ENCODE measurements at regions of chr2 and their contacts with region 1.

Region 1: GRCh38 chr2:69095305-69095704 is 82.3 kb downstream of the ANTXR1 start:
- DNase-seq: no peak
- H3K4me3 ChIP-seq: no peak overlapping the region
- H3K27ac ChIP-seq: peak overlapping the region; percentile 6 to 9
- H3K4me1 ChIP-seq: peaks cover 0 to 16% of the 10 kb centered on the region in 2 donors
- H3K27me3 ChIP-seq: no peaks in the 10 kb centered on the region
- CTCF ChIP-seq: no peak

Region 2: GRCh38 chr2:69059731-69060290 is 35.5 kb before region 1 on chr2:
- intact Hi-C with region 1: loop called (anchors 5 kb)
- DNase-seq: no peak
- H3K4me3 ChIP-seq: no peak overlapping the region
- H3K27ac ChIP-seq: peak overlapping the region; percentile 18 to 45
- H3K4me1 ChIP-seq: peaks cover 15 to 27% of the 10 kb centered on the region in 2 donors
- H3K27me3 ChIP-seq: no peaks in the 10 kb centered on the region
- CTCF ChIP-seq: no peak